Right cardiac atrium (tissue), 5 donors: ENCODE measurements at regions of chr2 and their contacts with region 1.

Region 1: GRCh38 chr2:231604685-231605606 is 12.3 kb downstream of the TEX44 start:
- DNase-seq: peak; percentile 100
- ATAC-seq: peak; percentile 93 to 95
- H3K4me3 ChIP-seq: peak overlapping the region; percentile 62
- H3K27ac ChIP-seq: peak overlapping the region; percentile 99
- H3K4me1 ChIP-seq: peaks cover 9% of the 10 kb centered on the region
- H3K27me3 ChIP-seq: no peaks in the 10 kb centered on the region

Region 2: DNA sequence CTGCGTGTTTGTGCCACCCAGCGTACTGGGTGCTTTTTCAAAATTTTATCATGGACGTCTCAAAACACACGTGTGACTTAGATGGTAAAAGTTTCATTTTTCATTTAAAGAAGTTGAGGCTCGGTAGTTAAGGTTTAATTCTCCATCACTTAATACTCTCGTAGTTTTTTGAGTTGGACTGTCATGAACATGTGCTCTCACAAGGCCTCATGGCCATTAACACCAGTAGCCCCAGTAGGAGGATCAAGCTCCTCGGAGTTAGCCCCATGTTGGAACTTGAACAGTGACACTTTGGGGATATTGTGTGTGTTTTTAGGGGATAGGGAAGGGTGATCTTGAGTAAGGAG is 90.0 kb before region 1 on chr2:
- intact Hi-C with region 1: loop called in 1 of 4 experiments (anchors 5 kb)
- DNase-seq: no peak
- ATAC-seq: no peak
- H3K4me3 ChIP-seq: peak overlapping the region; percentile 49
- H3K27ac ChIP-seq: peak overlapping the region; percentile 66
- H3K4me1 ChIP-seq: no peaks in the 10 kb centered on the region
- H3K27me3 ChIP-seq: no peaks in the 10 kb centered on the region

Region 3: DNA sequence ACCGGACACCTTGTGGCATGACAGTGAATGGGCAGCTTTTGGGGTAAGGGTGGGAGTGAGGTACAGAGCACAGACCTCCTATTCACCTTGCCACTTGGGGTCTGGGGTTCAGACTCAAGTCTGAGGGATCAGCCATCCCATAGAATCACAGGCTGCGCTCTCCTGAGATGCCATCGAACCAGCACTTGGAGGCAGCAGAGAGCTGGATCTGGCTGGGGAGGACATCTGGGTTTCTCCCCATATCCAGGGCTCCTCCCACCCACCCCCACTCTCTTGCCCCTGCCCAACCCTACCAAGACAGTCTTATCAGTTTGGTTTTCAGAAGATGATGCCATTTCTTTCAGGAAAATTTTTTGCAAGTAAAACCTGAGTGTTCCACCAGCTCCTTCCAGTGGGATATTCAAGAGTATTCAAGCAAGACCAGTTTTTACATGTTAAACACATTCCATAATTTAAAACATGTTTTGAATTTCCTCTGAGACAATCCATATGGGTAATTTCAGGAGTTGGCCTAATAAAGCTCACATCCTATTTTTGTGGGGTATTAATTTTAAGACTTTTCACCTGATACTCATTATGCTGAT is 41.5 kb before region 1 on chr2:
- intact Hi-C with region 1: loop called in 2 of 4 experiments (anchors 5 kb)
- DNase-seq: peak; percentile 57 to 72 (median 72)
- ATAC-seq: peak; percentile 87 to 89
- H3K4me3 ChIP-seq: no peak overlapping the region
- H3K27ac ChIP-seq: no peak overlapping the region
- H3K4me1 ChIP-seq: no peaks in the 10 kb centered on the region
- H3K27me3 ChIP-seq: no peaks in the 10 kb centered on the region